ENCODE measurements at regions of chr20 and their contacts with region 1.

Region 1: DNA sequence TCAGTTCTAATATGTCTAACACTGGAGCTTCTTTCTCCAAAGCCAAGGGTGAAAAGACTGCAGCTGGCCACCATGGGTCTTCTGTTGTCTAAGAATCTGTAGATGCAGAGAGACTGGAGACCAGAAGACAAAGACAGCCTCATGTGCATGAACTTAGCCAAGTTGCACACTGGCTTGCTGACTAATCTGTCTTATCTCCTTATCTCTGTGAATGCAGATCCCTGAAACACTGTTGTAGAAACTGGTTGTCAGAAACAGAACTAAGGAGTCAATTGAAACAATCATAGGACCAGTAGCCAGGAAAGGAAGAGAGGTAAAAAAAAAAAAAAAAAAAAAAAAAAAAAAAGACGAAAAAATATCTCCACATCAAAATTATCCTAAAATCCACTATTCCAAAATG is 109.7 kb downstream of the BFSP1 start:
- DNase-seq: no peak
- CTCF ChIP-seq: no peak

Region 2: GRCh38 chr20:17431621-17432364 is 10.3 kb after region 1 on chr20:
- CTCF ChIA-PET with region 1: interaction called, 25 read pairs
- POLR2A ChIA-PET with region 1: no interaction called
- DNase-seq: peak; percentile 71
- CTCF ChIP-seq: peak; percentile 78

Region 3: DNA sequence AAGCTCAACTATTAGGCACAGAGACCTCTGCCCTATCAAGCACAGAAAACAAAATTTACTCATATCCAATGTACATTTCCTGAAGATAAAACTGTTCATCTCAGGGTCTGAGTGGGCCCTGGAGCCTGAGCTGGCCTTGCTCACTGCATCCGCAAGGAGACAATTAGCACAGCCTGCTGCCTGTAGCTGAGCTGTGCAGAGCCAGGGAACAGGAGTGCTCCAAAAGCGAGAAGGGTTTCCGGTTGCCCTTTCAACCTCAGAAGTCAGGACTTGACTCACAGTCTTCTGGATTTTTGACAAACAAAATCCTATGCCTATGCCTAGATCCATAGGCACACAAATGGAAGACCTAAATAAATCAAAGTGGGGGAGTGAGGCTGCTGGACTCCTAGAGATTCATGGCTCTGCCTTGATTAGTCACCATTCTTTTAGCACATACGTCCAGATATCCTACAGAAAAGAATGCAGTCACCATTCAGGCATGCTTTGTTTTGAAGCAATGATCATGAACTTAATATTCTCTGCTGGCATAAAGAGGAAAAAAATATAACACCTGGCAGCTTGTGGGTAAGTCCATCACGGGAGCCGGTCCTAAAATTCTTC is 36.2 kb after region 1 on chr20:
- CTCF ChIA-PET with region 1: no interaction called
- POLR2A ChIA-PET with region 1: no interaction called
- DNase-seq: no peak
- CTCF ChIP-seq: no peak